Naive thymus-derived CD8-positive, alpha-beta T cell (primary cell): ENCODE measurements at regions of chr10 and their contacts with region 1.

Region 1: DNA sequence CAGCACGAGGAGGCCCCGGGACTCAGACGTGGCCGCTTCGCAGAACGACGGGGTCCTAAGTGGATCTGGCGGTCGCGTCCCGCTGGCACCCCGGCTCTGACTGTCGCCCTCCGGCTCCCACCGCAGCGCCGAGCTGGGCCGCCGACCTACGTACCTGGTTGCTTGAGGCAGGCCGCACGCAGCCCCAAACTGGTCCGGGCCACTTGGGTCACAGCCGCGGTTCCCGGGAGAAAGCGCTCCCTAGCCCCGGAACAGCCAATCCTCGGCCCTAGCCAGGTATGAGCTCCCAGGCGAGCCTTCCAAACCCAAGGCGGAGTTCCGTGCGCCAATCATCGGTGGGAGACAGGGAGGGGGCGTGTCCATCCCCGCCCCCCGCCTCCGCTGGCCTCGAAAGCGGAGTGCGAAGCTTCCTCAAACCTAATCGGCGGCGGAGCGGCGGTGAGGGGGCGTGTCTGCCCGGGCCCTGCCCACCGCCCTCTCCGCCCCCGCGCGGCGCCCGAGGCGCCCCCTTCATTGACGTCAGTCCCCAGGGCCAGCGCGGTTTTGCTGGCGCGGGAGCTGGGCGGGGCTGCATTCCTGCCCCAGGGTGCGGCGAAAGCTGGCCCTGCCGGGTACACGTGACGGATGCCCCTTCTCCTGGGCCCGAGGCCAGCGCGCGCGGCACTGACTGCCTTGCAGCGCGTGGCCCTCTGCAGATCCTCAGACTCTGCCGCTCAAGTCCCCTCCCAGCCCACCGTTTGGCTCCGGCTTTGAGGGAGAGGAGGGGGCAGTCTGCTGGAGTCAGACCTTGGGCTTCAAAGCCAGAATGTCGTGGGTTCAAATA is at the start of gene AVPI1:
- DNase-seq: peak; percentile 92 to 98 (median 97)
- ATAC-seq: peak; percentile 90 to 92
- H3K4me3 Mint-ChIP-seq: peak within 1 kb of the TSS; percentile 83 to 94 (median 88)
- H3K27ac Mint-ChIP-seq: peak within 1 kb of the TSS; percentile 58 to 95 (median 92)
- H3K4me1 Mint-ChIP-seq: peaks cover 8 to 33% (median 24%) of the 10 kb centered on the region in 4 donors
- H3K27me3 Mint-ChIP-seq: no peaks in the 10 kb centered on the region
- polyA plus RNA-seq, gene AVPI1: 2.2 to 3.8 (median 3.2) TPM

Region 2: DNA sequence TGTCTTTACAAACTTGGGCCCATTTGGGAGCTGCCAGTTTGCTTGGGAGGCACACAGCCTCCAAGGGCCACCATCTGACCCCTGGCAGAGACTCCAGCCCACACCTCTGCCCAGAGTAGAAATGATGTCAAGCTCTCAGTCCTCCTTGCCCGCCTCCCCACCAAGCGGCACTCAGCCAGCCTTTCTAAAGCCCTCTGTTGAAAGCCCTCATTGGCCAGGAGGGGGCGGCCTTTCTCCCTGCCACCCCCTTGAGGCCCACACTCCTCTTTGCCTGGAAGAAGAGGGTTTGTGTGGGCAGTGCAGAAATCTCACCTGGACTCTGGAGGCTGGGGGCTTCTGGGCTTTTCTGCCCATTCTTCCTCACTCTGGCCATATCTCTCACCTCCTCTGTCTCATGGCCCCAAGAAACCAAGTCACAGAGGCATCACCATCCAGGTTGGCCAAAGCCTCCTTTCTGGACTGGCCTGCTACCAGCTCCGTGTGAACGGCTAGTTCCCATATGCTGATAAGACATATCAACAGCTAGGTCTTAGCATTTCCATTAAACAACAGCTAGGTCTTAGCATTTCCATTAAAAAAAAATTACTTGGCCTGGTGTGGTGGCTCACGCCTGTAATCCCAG is 152.3 kb before region 1 on chr10:
- POLR2A ChIA-PET with region 1: no interaction called
- DNase-seq: no peak
- ATAC-seq: peak in 1 of 2 donors; percentile 40
- H3K4me3 Mint-ChIP-seq: no peak overlapping the region
- H3K27ac Mint-ChIP-seq: no peak overlapping the region
- H3K4me1 Mint-ChIP-seq: peaks cover 0 to 3% (median 0%) of the 10 kb centered on the region in 4 donors
- H3K27me3 Mint-ChIP-seq: no peaks in the 10 kb centered on the region

Region 3: GRCh38 chr10:97601268-97602215 is 85.6 kb before region 1 on chr10:
- POLR2A ChIA-PET with region 1: no interaction called
- DNase-seq: no peak
- ATAC-seq: no peak
- H3K4me3 Mint-ChIP-seq: no peak overlapping the region
- H3K27ac Mint-ChIP-seq: no peak overlapping the region
- H3K4me1 Mint-ChIP-seq: no peaks in the 10 kb centered on the region
- H3K27me3 Mint-ChIP-seq: no peaks in the 10 kb centered on the region

Region 4: DNA sequence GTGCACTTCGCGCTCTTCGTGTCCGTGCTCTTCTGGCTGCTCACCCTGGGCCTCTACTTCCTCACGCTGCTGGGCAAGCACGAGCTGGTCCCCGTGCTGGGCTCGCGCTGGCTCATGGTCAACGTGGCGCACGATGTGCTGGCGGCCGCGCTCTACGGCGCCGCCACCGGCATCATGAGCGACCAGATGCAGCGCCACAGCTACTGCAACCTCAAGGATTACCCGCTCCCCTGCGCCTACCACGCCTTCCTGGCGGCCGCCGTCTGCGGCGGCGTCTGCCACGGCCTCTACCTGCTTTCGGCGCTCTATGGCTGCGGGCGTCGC is 26.8 kb after region 1 on chr10:
- POLR2A ChIA-PET with region 1: interaction called, 11 read pairs
- DNase-seq: peak in 8 of 10 donors; percentile 18 to 69 (median 38)
- ATAC-seq: peak; percentile 86 to 87
- H3K4me3 Mint-ChIP-seq: peak overlapping the region; percentile 94 to 100 (median 98)
- H3K27ac Mint-ChIP-seq: peak overlapping the region; percentile 18 to 94 (median 83)
- H3K4me1 Mint-ChIP-seq: peaks cover 8 to 20% (median 14%) of the 10 kb centered on the region in 4 donors
- H3K27me3 Mint-ChIP-seq: peaks cover 7 to 33% (median 11%) of the 10 kb centered on the region in 5 donors

Region 5: DNA sequence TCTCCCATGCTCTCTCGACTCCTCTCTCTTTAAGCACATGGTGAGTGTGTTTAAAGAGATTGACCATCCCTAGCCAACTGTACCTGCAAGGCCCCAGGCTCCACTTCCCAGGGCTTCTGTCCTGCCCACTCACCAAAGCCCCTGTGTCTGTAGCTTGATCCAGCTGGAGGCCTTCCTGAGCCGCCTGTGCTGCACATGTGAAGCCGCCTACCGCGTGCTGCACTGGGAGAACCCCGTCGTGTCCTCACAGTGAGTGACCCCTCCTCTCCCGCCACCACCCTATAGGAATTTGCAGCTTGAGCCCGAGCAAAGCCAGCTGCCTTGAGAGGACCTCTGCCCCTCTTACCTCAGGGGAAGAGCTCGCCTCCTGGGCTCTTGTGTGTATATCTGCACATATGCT is 60.9 kb after region 1 on chr10:
- POLR2A ChIA-PET with region 1: no interaction called
- DNase-seq: no peak
- ATAC-seq: no peak
- H3K4me3 Mint-ChIP-seq: no peak overlapping the region
- H3K27ac Mint-ChIP-seq: no peak overlapping the region
- H3K4me1 Mint-ChIP-seq: peaks cover 11 to 33% (median 23%) of the 10 kb centered on the region in 4 donors
- H3K27me3 Mint-ChIP-seq: no peaks in the 10 kb centered on the region